Endothelial cell of umbilical vein (primary cell): ENCODE measurements at regions of chr1 and their contacts with region 1.

Region 1: DNA sequence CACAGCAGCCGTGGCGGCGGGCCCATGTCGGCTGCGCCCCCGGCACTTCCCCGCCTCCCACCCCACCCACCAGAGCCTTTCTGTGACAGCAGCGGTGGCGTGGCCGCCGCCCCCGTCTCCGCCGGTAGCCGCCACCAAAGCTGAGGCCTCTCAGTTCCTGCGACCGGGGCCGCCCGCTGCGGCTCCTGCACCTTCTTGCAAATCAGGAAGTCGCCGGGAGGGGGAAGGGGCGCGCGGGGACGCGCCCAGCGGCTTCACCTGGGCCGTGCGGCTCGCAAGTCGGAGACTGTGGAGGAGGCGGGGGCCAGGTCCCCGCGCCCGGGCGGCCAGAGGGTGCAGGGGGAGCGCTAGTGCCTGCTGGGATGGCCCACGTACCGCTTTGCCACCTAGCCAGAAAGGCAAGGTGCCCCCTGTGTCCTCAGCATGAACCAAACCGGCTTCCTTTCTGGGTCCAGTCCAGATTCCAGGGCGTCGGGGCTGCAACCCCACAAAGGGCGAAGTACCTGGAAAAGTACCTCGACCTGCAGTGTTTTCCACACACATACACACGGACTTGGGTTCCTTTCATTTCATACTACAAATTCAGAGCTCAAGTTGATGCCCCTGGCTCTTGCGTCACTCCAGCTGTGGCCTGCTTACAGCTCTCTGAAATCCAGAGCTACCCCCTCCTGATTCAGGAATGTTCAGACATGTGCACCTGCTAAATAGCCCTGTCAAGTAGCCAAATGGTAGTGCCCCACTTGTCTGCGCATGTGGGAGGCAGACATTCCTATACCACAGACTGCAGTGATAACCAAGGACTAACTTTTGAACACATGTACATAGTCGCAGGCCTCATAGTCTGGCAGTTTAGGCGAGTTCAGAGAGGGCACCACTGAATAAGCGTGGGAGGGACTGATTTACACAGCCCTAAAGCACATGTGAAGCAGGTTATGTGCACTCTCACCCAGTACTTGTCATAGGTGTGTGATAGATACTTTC is at the start of gene DENND1B:
- DNase-seq: peak; percentile 52
- H3K4me3 ChIP-seq: peak within 1 kb of the TSS; percentile 53 to 65 (median 63)
- H3K27ac ChIP-seq: peak within 1 kb of the TSS; percentile 30
- H3K4me1 ChIP-seq: peaks cover 21% of the 10 kb centered on the region
- H3K27me3 ChIP-seq: no peaks in the 10 kb centered on the region
- CTCF ChIP-seq: no peak
- POLR2A ChIP-seq: no peak
- total RNA-seq, gene DENND1B: 3.3 and 5.4 TPM in 2 replicates

Region 2: DNA sequence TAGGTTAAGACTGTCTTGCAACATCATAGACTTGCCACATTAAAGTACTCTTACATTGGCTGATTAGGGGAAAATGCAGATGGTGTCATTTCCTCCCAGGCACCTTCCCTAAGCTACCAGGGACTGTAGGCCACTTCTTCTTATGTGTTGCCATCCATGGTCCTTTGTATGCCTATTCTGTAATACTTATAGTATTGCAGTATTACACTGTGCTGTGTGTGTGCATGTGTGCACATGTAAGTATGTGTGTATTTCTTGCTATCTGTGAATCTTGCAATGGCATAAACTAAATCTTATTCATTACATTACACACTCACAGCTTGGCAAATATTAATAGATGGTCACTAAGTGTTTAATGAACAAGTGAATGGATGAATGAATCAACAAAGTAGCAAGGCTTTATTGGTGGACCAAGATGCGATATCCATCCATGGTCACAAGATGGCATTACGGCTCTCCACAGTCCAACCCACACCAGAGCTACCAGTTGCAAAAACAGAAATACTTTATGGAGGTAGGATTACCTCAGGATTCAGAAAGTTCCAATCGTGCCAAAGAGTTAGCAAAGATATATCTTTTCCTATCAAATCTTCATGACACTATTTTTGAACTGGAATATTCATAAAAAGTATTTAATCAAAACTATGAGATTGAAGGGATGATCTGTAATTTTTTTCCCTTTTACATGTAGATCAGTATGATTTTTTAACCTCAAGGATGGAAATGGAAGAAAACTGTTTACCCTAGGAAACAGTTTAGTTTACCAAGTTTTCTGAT is 160.5 kb before region 1 on chr1:
- CTCF ChIA-PET with region 1: no interaction called
- POLR2A ChIA-PET with region 1: no interaction called
- dilution Hi-C with region 1: no loop called
- intact Hi-C with region 1: loop called (anchors 2 kb)
- DNase-seq: peak; percentile 55
- H3K4me3 ChIP-seq: no peak overlapping the region
- H3K27ac ChIP-seq: no peak overlapping the region
- H3K4me1 ChIP-seq: no peaks in the 10 kb centered on the region
- H3K27me3 ChIP-seq: no peaks in the 10 kb centered on the region
- CTCF ChIP-seq: peak; percentile 51 to 57
- POLR2A ChIP-seq: no peak

Region 3: DNA sequence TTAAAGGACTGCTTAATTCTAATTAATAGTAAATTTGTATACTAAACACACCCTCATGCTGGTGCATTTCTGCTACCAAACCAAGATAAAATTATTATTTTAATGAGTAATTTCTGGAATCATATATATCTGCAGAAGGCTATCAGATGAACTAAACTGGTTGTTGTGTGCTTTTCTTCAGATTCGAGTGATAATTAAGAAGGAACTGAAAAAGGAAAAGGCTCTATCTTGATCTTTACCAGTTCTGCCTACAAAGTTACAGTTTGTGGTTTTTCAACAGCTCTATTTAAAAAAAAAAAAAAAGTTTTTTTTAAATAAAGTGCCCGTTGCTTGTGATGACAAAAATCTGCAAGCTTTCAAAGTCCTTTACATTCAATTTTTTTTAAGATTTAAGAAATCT is 14.0 kb before region 1 on chr1:
- CTCF ChIA-PET with region 1: interaction called, 3 read pairs
- POLR2A ChIA-PET with region 1: no interaction called
- dilution Hi-C with region 1: no loop called
- intact Hi-C with region 1: loop called (anchors 2 kb)
- DNase-seq: no peak
- H3K4me3 ChIP-seq: no peak overlapping the region
- H3K27ac ChIP-seq: no peak overlapping the region
- H3K4me1 ChIP-seq: no peaks in the 10 kb centered on the region
- H3K27me3 ChIP-seq: no peaks in the 10 kb centered on the region
- CTCF ChIP-seq: no peak
- POLR2A ChIP-seq: no peak

Region 4: DNA sequence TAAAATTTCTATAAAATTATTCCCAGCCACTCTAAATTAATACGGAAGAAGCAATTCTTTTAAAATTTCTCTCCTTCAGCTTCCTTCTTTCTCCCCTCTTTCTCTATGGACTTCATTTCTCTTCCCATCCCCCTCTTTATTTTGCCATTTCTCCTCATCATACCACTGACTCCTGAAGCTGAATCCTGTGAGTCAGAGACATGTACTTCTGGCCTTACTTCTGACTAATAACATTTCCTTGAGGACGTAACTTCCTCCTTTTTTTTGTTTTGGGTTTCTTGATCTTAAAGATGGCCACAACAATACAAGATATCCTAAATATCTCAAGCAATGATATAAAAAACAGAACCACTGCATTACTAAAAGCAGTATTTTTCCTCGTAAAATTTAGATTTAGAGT is 63.3 kb after region 1 on chr1:
- CTCF ChIA-PET with region 1: no interaction called
- POLR2A ChIA-PET with region 1: no interaction called
- dilution Hi-C with region 1: no loop called
- intact Hi-C with region 1: loop called (anchors 1 kb)
- DNase-seq: peak; percentile 64
- H3K4me3 ChIP-seq: no peak overlapping the region
- H3K27ac ChIP-seq: peak overlapping the region; percentile 85
- H3K4me1 ChIP-seq: peaks cover 13% of the 10 kb centered on the region
- H3K27me3 ChIP-seq: no peaks in the 10 kb centered on the region
- CTCF ChIP-seq: no peak
- POLR2A ChIP-seq: no peak

Region 5: DNA sequence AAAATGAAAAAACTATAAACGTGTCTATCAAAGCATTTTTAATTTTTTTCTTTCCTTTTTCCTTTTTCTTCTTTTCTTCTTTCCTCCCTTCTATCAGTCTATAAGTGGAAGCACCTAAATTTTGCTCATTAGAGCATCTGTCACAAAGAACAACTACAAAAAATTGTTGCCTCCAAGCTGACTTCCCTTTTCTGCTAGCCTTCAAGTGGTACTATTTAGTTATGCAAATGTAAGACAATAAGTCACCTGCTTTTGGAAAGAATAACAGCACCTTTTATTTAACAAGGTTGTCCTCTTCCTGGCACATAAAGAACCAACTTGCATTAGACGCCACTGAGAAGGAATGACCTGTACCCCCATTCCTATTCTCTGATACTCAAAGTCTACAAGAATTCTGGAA is 81.9 kb after region 1 on chr1:
- CTCF ChIA-PET with region 1: no interaction called
- POLR2A ChIA-PET with region 1: no interaction called
- dilution Hi-C with region 1: no loop called
- intact Hi-C with region 1: no loop called
- DNase-seq: no peak
- H3K4me3 ChIP-seq: no peak overlapping the region
- H3K27ac ChIP-seq: no peak overlapping the region
- H3K4me1 ChIP-seq: no peaks in the 10 kb centered on the region
- H3K27me3 ChIP-seq: no peaks in the 10 kb centered on the region
- CTCF ChIP-seq: no peak
- POLR2A ChIP-seq: no peak